Calu3 (cell line): ENCODE measurements at regions of chr18 and their contacts with region 1.

Region 1: DNA sequence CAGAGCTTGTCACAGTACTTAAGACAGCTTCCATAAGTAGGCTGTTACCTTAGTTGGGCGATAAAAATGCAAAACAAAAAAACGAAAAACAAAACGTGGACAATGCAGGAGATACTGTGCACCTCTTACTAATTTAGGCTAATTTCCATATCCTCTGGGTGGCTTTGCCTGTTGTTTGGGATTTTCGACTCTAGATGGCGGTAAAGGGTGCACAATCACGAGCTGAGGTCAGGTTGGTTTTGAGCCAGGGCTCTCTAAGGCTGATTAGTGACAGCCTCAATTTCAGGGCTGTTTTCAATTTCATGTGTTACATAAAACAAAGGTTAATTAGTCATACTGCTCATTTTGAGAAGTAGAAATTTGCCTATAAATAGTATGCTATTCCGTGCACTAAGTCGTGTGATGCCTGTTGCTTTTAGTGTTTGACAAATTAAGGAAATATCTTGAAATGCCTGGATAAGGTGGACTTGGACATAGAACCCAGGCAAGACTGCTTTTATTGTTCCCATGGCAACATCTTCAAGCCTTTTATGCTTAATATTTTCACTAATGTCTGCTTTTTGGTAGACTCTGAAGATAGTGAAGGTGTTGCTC is 493.1 kb downstream of the SOCS6 start:
- DNase-seq: peak; percentile 71
- H3K4me3 Mint-ChIP-seq: no peak overlapping the region
- H3K27ac Mint-ChIP-seq: no peak overlapping the region
- H3K4me1 Mint-ChIP-seq: no peaks in the 10 kb centered on the region
- H3K27me3 Mint-ChIP-seq: peaks cover 23% of the 10 kb centered on the region
- CTCF ChIP-seq: peak; percentile 78

Region 2: GRCh38 chr18:70491734-70492348 is 290.1 kb before region 1 on chr18:
- CTCF ChIA-PET with region 1: no interaction called
- intact Hi-C with region 1: loop called (anchors 10 kb)
- DNase-seq: peak; percentile 75
- H3K4me3 Mint-ChIP-seq: no peak overlapping the region
- H3K27ac Mint-ChIP-seq: no peak overlapping the region
- H3K4me1 Mint-ChIP-seq: peaks cover 8% of the 10 kb centered on the region
- H3K27me3 Mint-ChIP-seq: no peaks in the 10 kb centered on the region
- CTCF ChIP-seq: peak; percentile 70

Region 3: GRCh38 chr18:70931942-70932814 is 150.2 kb after region 1 on chr18:
- CTCF ChIA-PET with region 1: no interaction called
- intact Hi-C with region 1: loop called (anchors 10 kb)
- DNase-seq: peak; percentile 7
- H3K4me3 Mint-ChIP-seq: no peak overlapping the region
- H3K27ac Mint-ChIP-seq: no peak overlapping the region
- H3K4me1 Mint-ChIP-seq: peaks cover 8% of the 10 kb centered on the region
- H3K27me3 Mint-ChIP-seq: no peaks in the 10 kb centered on the region
- CTCF ChIP-seq: peak; percentile 49

Region 4: GRCh38 chr18:72086421-72086820 is 1304.5 kb after region 1 on chr18:
- CTCF ChIA-PET with region 1: no interaction called
- intact Hi-C with region 1: loop called (anchors 2 kb)
- DNase-seq: no peak
- H3K4me3 Mint-ChIP-seq: no peak overlapping the region
- H3K27ac Mint-ChIP-seq: no peak overlapping the region
- H3K4me1 Mint-ChIP-seq: peaks cover 9% of the 10 kb centered on the region
- H3K27me3 Mint-ChIP-seq: no peaks in the 10 kb centered on the region
- CTCF ChIP-seq: peak; percentile 62

Region 5: GRCh38 chr18:72544092-72544886 is 1762.3 kb after region 1 on chr18 and contains the start of gene CBLN2:
- CTCF ChIA-PET with region 1: no interaction called
- intact Hi-C with region 1: loop called (anchors 5 kb)
- DNase-seq: peak; percentile 89
- H3K4me3 Mint-ChIP-seq: peak within 1 kb of the TSS; percentile 60
- H3K27ac Mint-ChIP-seq: no peak within 1 kb of the TSS
- H3K4me1 Mint-ChIP-seq: no peaks in the 10 kb centered on the region
- H3K27me3 Mint-ChIP-seq: no peaks in the 10 kb centered on the region
- CTCF ChIP-seq: peak; percentile 93
- total RNA-seq, gene CBLN2: 0.24 TPM in 1 of 2 replicates, not detected in the other

Region 6: GRCh38 chr18:72672364-72673184 is 1890.6 kb after region 1 on chr18:
- CTCF ChIA-PET with region 1: no interaction called
- intact Hi-C with region 1: loop called (anchors 1 kb)
- DNase-seq: peak; percentile 29
- H3K4me3 Mint-ChIP-seq: no peak overlapping the region
- H3K27ac Mint-ChIP-seq: no peak overlapping the region
- H3K4me1 Mint-ChIP-seq: no peaks in the 10 kb centered on the region
- H3K27me3 Mint-ChIP-seq: no peaks in the 10 kb centered on the region
- CTCF ChIP-seq: peak; percentile 71